ENCODE measurements at regions of chr5 and their contacts with region 1.

Region 1: DNA sequence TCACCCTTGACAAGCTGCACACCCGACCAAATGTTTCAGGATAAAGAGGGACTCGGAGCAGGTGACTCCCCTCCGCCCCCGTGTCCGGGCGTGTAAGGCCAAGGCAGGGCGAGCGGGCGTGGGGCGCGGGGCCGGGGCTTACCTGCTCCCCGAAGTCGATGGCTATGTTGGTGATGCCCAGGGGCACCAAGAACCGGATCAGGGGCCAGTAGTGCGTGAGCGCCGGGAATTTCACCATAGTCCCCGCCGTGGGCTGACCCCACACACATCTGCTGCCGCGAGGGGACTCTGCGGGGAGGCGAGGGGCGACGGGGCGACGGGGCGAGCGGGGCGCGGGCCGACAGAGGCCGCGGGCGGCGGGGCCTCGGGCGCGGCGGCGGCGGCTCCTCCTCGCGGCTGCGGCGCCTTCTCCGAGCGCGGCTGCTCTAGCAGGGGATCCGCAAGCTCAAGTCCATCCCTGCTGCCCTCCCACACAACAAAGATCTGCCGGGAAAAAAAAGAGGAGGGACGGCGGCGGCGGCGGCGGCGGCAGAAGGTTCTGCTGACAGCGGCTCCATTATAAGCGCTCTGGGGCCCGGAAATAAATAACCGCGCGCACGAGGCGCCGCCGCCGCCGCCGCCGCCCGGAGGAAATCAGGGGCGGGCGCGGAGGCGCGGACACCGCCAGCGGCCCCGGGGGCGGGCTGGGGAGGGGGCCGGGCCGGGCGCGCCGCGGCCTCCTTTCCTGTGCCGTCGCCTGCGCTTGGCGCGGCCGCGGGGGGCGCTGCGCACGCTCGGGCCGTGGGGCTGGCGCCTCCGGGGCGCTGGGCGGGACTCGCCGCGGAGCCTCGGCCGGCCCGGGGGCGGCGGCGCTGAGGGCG is at the start of gene ANKH:
- DNase-seq: peak; percentile 79
- H3K4me3 Mint-ChIP-seq: peak within 1 kb of the TSS; percentile 98
- H3K27ac Mint-ChIP-seq: peak within 1 kb of the TSS; percentile 89
- H3K4me1 Mint-ChIP-seq: peaks cover 29% of the 10 kb centered on the region
- H3K27me3 Mint-ChIP-seq: peaks cover 9% of the 10 kb centered on the region
- total RNA-seq, gene ANKH: 45.0 and 45.4 TPM in 2 replicates

Region 2: GRCh38 chr5:14595189-14595588 is 276.3 kb before region 1 on chr5:
- intact Hi-C with region 1: loop called (anchors 2 kb)
- DNase-seq: peak; percentile 66
- H3K4me3 Mint-ChIP-seq: peak overlapping the region; percentile 68
- H3K27ac Mint-ChIP-seq: peak overlapping the region; percentile 93
- H3K4me1 Mint-ChIP-seq: peaks cover 83% of the 10 kb centered on the region
- H3K27me3 Mint-ChIP-seq: no peaks in the 10 kb centered on the region

Region 3: DNA sequence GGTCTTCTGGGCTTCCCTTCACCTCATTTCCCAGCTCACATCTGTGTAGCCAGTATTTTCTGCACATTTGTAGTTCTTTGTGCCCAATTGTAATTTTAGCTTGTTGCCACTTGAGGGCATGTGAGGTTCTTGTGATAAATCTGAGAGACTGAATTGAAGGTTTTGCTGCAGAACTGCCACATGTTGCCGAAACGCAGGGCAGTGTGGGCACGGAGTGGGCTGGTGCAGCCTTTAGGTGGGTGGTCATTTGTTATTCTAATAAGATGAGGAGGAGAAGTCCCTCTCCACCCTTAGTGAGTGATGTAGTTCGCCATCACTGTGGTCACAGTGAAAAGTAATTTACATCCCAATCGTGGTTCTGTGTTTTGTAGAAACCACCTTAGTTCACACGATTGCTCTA is 185.7 kb before region 1 on chr5:
- intact Hi-C with region 1: loop called (anchors 5 kb)
- DNase-seq: peak; percentile 21
- H3K4me3 Mint-ChIP-seq: no peak overlapping the region
- H3K27ac Mint-ChIP-seq: peak overlapping the region; percentile 48
- H3K4me1 Mint-ChIP-seq: peaks cover 16% of the 10 kb centered on the region
- H3K27me3 Mint-ChIP-seq: no peaks in the 10 kb centered on the region

Region 4: DNA sequence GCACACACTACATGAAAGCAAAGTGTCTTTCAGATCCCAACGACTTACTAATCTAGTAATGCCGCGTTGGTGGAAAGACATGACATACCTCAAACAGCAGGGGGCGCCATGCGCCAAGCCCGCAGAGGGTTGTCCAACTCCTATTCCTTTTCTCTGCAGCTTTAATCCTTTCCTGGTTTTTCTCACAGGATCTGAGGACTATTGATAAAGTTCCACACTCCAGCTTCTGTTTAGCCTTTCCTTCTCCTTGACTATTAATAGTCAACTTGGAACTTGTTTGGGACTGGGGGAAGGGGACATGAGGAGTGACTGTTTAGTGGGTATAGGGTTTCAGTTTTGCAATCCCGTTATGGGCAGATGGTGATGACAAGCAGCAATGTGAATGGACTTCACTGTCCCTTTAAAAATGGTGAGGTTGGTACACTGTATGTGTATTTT is 144.0 kb before region 1 on chr5:
- intact Hi-C with region 1: loop called (anchors 2 kb)
- DNase-seq: peak; percentile 57
- H3K4me3 Mint-ChIP-seq: no peak overlapping the region
- H3K27ac Mint-ChIP-seq: no peak overlapping the region
- H3K4me1 Mint-ChIP-seq: peaks cover 2% of the 10 kb centered on the region
- H3K27me3 Mint-ChIP-seq: no peaks in the 10 kb centered on the region

Region 5: GRCh38 chr5:14816999-14817761 is 54.3 kb before region 1 on chr5:
- intact Hi-C with region 1: loop called (anchors 2 kb)
- DNase-seq: no peak
- H3K4me3 Mint-ChIP-seq: no peak overlapping the region
- H3K27ac Mint-ChIP-seq: peak overlapping the region; percentile 43
- H3K4me1 Mint-ChIP-seq: peaks cover 43% of the 10 kb centered on the region
- H3K27me3 Mint-ChIP-seq: no peaks in the 10 kb centered on the region

Region 6: GRCh38 chr5:14996997-14997396 is 125.6 kb after region 1 on chr5:
- intact Hi-C with region 1: loop called (anchors 2 kb)
- DNase-seq: no peak
- H3K4me3 Mint-ChIP-seq: no peak overlapping the region
- H3K27ac Mint-ChIP-seq: no peak overlapping the region
- H3K4me1 Mint-ChIP-seq: peaks cover 31% of the 10 kb centered on the region
- H3K27me3 Mint-ChIP-seq: peaks cover 16% of the 10 kb centered on the region

Measured in activated T-helper 2 cell treated with anti-CD3 and anti-CD28 coated beads, Interferon-gamma antibody, Interleukin-2, Interleukin-4, amounts not matched to agents 10 μg/mL and 5 μg/mL and 100 μg/mL, durations not matched to agents 14 hours and 24 hours and 36 hours (primary cell).